AG04450 (cell line): ENCODE measurements at regions of chr5 and their contacts with region 1.

Region 1: GRCh38 chr5:108661590-108662219 is 86.0 kb upstream of the FER start:
- DNase-seq: no peak
- H3K4me3 ChIP-seq: no peak overlapping the region
- H3K27ac ChIP-seq: no peak overlapping the region
- H3K27me3 ChIP-seq: no peaks in the 10 kb centered on the region
- CTCF ChIP-seq: no peak

Region 2: GRCh38 chr5:108681079-108681921 is 19.6 kb after region 1 on chr5:
- CTCF ChIA-PET with region 1: interaction called, 15 read pairs
- POLR2A ChIA-PET with region 1: no interaction called
- DNase-seq: peak; percentile 46
- H3K4me3 ChIP-seq: no peak overlapping the region
- H3K27ac ChIP-seq: no peak overlapping the region
- H3K27me3 ChIP-seq: no peaks in the 10 kb centered on the region
- CTCF ChIP-seq: peak; percentile 91